ENCODE measurements at regions of chr11 and their contacts with region 1.

Region 1: DNA sequence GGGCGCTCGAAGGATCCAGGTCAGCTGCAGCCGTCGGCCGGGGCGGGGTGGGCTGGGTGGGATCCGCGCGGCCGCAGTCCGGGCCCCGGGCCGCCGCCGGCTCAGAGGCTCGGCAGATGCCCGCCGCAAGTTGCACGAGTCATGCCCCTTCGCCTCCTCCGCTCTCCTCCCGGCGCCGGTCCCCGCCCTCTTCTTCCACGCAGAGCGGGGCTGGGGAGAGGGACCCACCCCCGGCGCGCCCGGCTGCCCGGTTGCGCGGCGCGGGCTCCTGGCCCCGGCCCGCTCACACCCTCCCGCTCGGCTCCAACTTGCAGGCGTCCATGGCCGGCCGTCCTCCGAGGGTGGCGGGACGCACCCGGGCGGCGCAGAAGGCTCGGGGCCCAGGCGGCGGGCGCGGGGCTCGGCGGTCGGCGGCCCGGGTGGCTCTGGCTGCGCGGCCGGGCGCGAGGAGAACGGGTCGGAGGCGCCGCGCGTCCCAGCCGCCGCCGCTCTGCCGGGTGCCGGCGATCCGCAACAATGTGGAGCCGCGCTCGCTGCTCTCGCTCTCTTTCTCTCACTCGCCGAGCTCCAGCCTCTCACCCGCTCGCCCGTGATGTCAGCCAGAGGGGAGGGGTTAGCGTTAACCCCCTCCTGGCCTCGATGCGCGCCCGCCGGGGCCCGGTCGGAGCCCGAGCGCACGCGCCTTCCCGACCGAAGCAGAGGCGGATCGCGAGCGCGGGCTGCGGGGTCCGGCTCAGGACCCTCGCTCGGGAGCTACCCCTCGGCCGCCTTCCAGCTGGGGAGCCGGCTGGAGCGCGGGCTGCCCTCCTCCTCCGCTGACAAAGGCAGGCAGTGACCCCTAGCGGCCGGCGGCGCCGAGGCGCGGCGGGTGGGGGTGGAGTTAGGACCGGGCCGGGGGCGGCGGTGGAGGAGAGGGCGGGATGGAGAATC is at the start of gene NECTIN1:
- DNase-seq: peak; percentile 86
- H3K4me3 ChIP-seq: peak within 1 kb of the TSS; percentile 77 to 78
- H3K27ac ChIP-seq: peak within 1 kb of the TSS; percentile 84 to 92
- H3K4me1 ChIP-seq: peaks cover 12% of the 10 kb centered on the region
- H3K27me3 ChIP-seq: no peaks in the 10 kb centered on the region
- CTCF ChIP-seq: peak; percentile 94 to 98 (median 97)
- POLR2A ChIP-seq: peak; percentile 90
- total RNA-seq, gene NECTIN1: 18.7 to 28.2 TPM

Region 2: GRCh38 chr11:119356349-119357031 is 372.4 kb before region 1 on chr11:
- intact Hi-C with region 1: loop called (anchors 10 kb)
- DNase-seq: peak; percentile 56
- H3K4me3 ChIP-seq: peak overlapping the region; percentile 22 to 29
- H3K27ac ChIP-seq: peak overlapping the region; percentile 33 to 54
- H3K4me1 ChIP-seq: no peaks in the 10 kb centered on the region
- H3K27me3 ChIP-seq: no peaks in the 10 kb centered on the region
- CTCF ChIP-seq: peak; percentile 62 to 82 (median 79)
- POLR2A ChIP-seq: no peak

Region 3: GRCh38 chr11:119373921-119374631 is 354.8 kb before region 1 on chr11:
- intact Hi-C with region 1: loop called (anchors 10 kb)
- DNase-seq: peak; percentile 55
- H3K4me3 ChIP-seq: no peak overlapping the region
- H3K27ac ChIP-seq: peak overlapping the region; percentile 77 to 80
- H3K4me1 ChIP-seq: peaks cover 12% of the 10 kb centered on the region
- H3K27me3 ChIP-seq: no peaks in the 10 kb centered on the region
- CTCF ChIP-seq: peak; percentile 59 to 89 (median 74)
- POLR2A ChIP-seq: no peak

Region 4: DNA sequence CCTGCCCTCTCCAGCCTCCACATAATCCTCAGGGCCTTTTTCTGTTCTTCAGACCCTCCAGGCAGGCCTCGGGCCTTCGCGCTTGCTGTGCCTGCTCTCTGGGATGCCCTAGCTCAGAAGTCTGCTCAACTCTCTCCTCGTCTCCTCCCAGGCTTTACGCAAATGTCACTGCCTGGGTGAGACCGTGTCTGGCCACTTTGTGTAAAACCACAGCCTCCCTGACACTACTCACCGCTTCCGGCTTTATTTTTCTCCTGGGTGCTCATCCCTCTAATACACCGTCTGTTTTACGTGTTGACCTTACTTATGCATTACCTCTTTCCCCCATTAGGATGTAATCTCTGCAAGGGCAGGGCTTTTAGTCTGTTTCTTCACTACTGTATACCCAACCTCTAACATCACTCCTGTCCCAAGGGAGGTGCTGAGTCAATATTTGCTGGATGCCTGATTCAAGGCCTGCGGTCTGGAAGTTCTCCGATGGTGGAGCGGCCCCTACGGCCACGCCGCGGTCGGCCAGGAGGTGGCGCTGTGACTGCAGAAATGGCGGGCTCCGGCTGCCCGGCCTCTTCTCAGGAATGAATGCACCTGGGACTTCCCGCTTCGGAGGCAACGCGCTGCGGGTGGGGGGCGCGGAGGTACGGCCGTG is 247.8 kb before region 1 on chr11:
- intact Hi-C with region 1: loop called (anchors 5 kb)
- DNase-seq: peak; percentile 86
- H3K4me3 ChIP-seq: no peak overlapping the region
- H3K27ac ChIP-seq: no peak overlapping the region
- H3K4me1 ChIP-seq: no peaks in the 10 kb centered on the region
- H3K27me3 ChIP-seq: no peaks in the 10 kb centered on the region
- CTCF ChIP-seq: peak; percentile 98 to 99 (median 98)
- POLR2A ChIP-seq: no peak

Region 5: DNA sequence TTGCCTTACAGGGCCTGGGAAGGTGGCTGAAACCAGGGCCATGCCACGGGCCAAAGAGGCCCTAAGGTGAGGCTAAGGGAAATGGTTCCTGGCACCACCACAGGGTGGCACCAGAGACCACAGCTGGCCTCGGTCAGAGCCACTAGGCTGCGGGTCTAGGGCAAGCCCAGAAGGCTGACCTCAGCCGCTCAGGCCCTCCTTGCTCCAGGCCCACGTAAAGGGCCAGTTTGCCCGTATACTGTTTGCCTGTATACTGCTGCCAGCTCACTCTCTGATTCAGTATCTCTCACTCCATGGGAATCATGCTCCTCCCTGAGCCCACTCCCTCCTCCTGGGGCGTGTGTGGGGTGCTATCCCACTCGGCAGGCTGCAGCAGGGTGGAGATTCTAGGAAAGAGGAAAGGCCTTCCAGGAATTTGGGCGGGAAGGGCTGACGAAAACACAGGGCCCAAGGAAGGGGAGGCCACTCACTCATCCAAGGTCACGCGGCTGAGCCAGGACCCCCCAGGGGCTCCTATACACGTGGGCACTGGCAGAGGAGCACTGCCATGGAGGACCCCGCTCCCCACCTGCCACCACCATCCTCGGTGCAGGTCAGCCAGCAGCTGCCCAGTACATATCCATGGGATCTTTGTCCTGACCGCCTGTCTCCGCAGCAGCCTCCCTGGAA is 62.3 kb before region 1 on chr11:
- intact Hi-C with region 1: loop called (anchors 5 kb)
- DNase-seq: peak; percentile 61
- H3K4me3 ChIP-seq: no peak overlapping the region
- H3K27ac ChIP-seq: no peak overlapping the region
- H3K4me1 ChIP-seq: peaks cover 7% of the 10 kb centered on the region
- H3K27me3 ChIP-seq: no peaks in the 10 kb centered on the region
- CTCF ChIP-seq: peak; percentile 84 to 98 (median 96)
- POLR2A ChIP-seq: no peak

Region 6: DNA sequence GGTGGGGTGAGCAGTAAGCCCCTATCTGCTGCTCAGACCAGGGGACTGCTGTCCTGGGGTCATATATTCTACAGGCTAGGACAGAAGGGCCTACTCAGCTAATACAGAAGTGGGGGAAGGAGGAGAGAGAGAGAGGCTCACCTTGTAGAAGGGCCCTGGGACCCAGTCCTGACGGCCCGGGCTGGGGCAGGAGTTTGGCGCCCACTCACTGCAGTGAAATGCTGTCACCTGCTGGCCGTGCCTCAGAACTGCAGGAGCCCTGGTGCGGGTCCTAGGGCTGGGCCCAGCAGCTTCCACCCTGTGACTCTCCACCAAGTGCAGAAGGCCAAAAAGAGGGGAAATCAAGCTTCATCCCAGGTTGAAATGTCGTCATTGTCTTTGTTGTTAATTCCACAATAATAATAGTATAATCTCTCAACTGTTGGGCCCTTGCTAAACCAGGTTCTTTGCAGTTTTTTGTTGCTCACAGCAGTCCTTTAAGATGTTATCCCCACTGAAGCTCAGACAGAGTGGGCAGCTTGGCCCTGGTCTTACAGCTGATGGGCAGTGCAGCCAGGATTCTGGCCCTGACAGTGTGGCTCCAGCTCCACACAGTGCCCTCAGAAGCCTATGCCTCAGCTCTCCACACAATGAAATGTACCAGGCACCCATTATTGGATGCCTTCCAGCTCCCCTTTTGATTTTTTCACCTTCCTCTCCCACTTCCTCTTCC is 379.4 kb after region 1 on chr11:
- intact Hi-C with region 1: loop called (anchors 5 kb)
- DNase-seq: peak; percentile 67
- H3K4me3 ChIP-seq: no peak overlapping the region
- H3K27ac ChIP-seq: peak overlapping the region in 1 of 2 donors; percentile 2
- H3K4me1 ChIP-seq: no peaks in the 10 kb centered on the region
- H3K27me3 ChIP-seq: no peaks in the 10 kb centered on the region
- CTCF ChIP-seq: peak; percentile 92 to 99 (median 98)
- POLR2A ChIP-seq: no peak